ENCODE measurements at regions of chr15 and their contacts with region 1.

Region 1: DNA sequence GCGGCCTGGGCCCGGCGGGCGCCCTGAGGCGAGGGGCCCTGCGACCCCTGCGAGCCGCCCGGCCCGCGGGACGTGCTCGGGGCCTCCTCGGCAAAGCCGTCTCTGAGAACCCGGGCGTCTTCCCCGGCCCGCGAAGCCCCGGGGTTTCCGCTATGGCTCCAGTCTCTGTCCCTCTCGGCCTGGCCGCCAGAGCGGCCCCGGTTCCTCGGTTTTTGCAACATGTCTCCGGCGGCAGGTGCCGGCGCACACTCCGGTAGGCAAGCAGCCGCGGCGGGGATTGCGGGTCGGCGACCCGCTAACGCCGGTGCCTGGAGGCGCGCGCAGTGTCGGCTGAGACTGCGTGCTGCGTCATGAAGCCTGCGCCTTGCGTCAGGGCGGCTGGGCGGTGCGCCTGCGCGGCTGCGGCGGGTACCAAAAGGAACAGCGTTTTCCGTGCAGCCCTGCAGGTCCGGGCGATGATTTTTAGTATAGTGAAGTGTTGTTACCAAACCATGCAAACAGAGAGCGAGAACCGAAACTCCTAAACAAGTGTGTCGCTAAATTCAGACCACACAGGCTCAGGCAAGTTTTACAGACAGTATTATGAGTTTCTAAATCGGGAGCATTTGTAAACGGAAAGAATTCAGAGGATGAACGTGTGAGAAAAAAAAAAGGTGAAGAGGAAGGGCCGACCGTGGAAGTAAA is at the start of gene NSMCE3:
- DNase-seq: peak; percentile 90 to 94 (median 92)
- ATAC-seq: peak; percentile 93
- H3K4me3 ChIP-seq: peak within 1 kb of the TSS; percentile 96
- H3K4me3 Mint-ChIP-seq: peak within 1 kb of the TSS; percentile 90 to 100 (median 99)
- H3K27ac ChIP-seq: peak within 1 kb of the TSS; percentile 97
- H3K27ac Mint-ChIP-seq: peak within 1 kb of the TSS; percentile 98 to 100 (median 99)
- H3K4me1 ChIP-seq: peaks cover 13 to 29% of the 10 kb centered on the region in 2 donors
- H3K4me1 Mint-ChIP-seq: peaks cover 28 to 59% (median 52%) of the 10 kb centered on the region in 7 donors
- H3K27me3 ChIP-seq: no peaks in the 10 kb centered on the region
- H3K27me3 Mint-ChIP-seq: peaks cover 0 to 6% (median 0%) of the 10 kb centered on the region in 5 donors
- total RNA-seq, gene NSMCE3: 11.0 to 39.2 (median 18.5) TPM

Region 2: DNA sequence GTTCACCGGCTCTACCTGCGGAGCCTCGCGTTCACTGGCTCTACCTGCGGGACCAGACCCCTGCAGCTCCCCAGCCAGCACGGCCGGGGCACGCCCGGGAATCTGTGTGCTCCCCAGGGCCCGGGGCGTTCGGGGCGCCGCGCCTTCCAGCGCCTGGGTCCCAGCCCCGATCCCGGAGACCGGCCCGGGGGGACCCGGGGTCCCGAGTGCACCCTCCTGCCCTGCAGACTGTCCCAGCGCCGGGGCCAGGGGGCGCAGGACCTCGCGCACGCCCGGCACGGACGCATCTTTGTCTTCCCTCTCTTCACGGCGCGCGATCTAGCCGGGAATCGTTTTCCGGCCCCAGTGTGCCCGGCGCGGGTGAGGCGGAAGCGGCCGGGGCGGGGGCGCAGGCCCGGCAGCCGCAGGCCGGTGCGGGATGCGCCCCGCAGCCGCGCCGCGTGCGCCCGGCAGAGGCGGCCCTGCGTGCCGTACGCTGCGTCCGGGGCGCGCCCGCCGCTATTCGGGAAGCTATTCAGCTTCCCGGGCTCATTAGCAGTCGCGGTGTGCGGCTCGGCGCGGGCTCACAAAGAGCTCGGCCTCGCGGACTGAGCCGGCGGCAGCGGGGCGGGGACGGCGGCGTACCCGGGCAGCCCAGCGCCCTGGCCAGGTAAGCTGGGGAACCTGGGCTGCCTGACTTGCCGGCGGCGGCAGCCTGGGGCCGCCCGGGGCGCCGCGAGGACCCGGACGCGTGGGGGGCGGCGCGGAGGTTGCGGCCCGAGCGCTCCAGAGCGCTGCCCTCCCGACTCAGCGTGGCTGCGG is 383.8 kb before region 1 on chr15 and contains the start of gene APBA2:
- CTCF ChIA-PET with region 1: no interaction called
- POLR2A ChIA-PET with region 1: interaction called, 9 read pairs
- intact Hi-C with region 1: loop called in 1 of 2 experiments (anchors 10 kb)
- DNase-seq: peak; percentile 36 to 73 (median 67)
- ATAC-seq: peak; percentile 70
- H3K4me3 ChIP-seq: peak within 1 kb of the TSS; percentile 65
- H3K4me3 Mint-ChIP-seq: peak within 1 kb of the TSS; percentile 71 to 94 (median 92)
- H3K27ac ChIP-seq: peak within 1 kb of the TSS; percentile 79
- H3K27ac Mint-ChIP-seq: peak within 1 kb of the TSS in 8 of 9 donors; percentile 96 to 100 (median 98)
- H3K4me1 ChIP-seq: peaks cover 18 to 44% of the 10 kb centered on the region in 2 donors
- H3K4me1 Mint-ChIP-seq: peaks cover 29 to 45% (median 39%) of the 10 kb centered on the region in 7 donors
- H3K27me3 ChIP-seq: no peaks in the 10 kb centered on the region
- H3K27me3 Mint-ChIP-seq: peaks cover 0 to 42% (median 0%) of the 10 kb centered on the region in 5 donors
- total RNA-seq, gene APBA2: 7.7 to 139 (median 110) TPM

Region 3: DNA sequence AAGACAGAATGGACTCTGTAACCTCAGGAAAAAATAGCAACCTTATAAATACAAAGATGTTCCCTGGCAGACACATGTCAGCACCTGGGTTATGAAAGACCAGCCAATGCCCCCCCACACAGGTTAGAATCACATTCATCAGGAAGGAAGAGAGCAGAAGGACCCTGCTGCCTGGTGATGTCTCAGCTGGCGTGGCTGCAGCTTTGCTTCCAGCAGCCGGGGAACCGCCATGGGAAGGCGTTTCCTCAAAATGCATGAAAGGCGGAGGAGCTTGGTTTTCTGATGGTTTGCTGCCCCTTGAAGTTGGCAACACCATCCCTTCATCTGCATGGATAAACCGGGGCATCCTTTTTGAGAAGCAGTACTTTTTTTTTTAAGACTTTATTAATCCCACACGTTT is 10.9 kb after region 1 on chr15:
- CTCF ChIA-PET with region 1: no interaction called
- POLR2A ChIA-PET with region 1: interaction called, 10 read pairs
- intact Hi-C with region 1: no loop called
- DNase-seq: no peak
- ATAC-seq: no peak
- H3K4me3 ChIP-seq: no peak overlapping the region
- H3K4me3 Mint-ChIP-seq: no peak overlapping the region
- H3K27ac ChIP-seq: no peak overlapping the region
- H3K27ac Mint-ChIP-seq: no peak overlapping the region
- H3K4me1 ChIP-seq: no peaks in the 10 kb centered on the region
- H3K4me1 Mint-ChIP-seq: peaks cover 0 to 1% (median 0%) of the 10 kb centered on the region in 7 donors
- H3K27me3 ChIP-seq: no peaks in the 10 kb centered on the region
- H3K27me3 Mint-ChIP-seq: peaks cover 10 to 49% (median 20%) of the 10 kb centered on the region in 5 donors